ENCODE measurements at regions of chr15 and their contacts with region 1.

Region 1: GRCh38 chr15:22838292-22839042 is at the start of gene NIPA2:
- DNase-seq: peak; percentile 99
- ATAC-seq: peak; percentile 99
- total RNA-seq, gene NIPA2: 19.2 TPM

Region 2: DNA sequence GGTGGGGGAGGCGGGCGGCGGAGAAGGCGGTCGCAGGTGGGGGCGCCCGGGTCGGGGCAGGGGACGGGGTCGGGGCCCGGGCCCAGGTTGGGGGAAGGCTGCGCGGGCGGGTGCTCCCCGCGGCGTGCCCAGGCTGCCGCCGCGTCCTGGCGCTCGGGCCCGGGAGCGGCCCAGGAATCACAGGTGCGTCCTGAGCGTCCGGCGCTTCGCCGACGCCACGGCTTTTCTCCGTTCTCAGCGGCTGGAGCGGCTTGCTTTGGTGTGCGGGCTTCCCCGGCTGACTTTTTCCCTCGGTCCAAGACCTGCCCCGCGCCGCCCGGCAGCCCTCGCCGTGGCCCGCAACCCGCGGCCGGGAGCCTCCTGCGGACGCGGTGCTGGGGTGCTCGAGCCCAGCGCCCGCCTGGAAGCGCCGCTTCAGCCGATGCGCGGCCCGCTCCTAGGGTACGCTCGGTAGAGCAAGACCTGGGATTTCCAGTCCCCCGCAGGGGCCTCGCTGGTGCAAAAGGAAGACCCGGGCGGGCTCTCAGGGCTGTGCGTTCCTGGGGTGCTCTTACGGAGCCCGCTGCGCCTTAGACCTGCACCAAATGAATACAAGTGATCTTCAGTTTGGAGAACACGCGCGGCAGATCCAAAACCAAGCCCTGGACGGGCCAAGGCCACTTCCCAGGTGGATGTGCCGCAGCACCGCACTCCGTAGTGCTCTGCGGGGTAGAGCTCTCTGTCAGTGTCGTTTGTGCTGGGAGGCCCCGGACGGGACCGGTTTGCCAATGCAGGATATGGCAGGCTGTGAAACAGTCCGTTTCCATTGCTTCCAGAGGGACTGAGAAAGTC is 51.4 kb before region 1 on chr15:
- intact Hi-C with region 1: loop called (anchors 2 kb)
- DNase-seq: no peak
- ATAC-seq: peak; percentile 33

Region 3: GRCh38 chr15:22806664-22807063 is 31.8 kb before region 1 on chr15:
- intact Hi-C with region 1: no loop called
- DNase-seq: no peak
- ATAC-seq: peak; percentile 56

Measured in Right ventricle myocardium superior (tissue), 1 donor.